Activated CD4-positive, alpha-beta T cell treated with anti-CD3 and anti-CD28 coated beads for 36 hours (primary cell): ENCODE measurements at regions of chrX and their contacts with region 1.

Region 1: DNA sequence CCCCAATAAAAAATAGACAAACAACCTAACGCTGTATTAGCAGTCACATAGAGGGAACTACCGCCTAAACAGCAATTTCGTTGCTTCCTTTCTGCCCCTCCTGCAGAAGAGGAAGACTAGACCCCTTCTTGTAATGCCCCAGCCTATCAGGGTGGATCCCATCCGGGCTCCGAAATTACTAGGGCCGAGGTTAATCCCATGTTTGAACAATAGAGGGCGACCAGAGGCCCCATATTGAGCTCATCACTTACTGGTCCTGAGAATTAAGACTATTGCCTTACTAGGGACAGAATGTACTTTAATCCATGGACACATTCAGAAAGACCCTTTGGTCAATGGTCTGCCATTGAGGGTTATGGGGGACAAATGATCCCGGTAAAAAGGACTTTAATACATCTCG is 11.8 kb upstream of the ZNF630 start:
- DNase-seq: peak; percentile 60
- ATAC-seq: peak; percentile 68
- H3K4me3 Mint-ChIP-seq: no peak overlapping the region
- H3K27ac Mint-ChIP-seq: no peak overlapping the region
- H3K4me1 Mint-ChIP-seq: no peaks in the 10 kb centered on the region
- H3K27me3 Mint-ChIP-seq: no peaks in the 10 kb centered on the region

Region 2: GRCh38 chrX:48468693-48469691 is 385.8 kb after region 1 on chrX:
- CTCF ChIA-PET with region 1: no interaction called
- POLR2A ChIA-PET with region 1: no interaction called
- intact Hi-C with region 1: loop called (anchors 2 to 5 kb)
- DNase-seq: peak; percentile 61
- ATAC-seq: peak; percentile 47
- H3K4me3 Mint-ChIP-seq: peak overlapping the region; percentile 89
- H3K27ac Mint-ChIP-seq: peak overlapping the region; percentile 95
- H3K4me1 Mint-ChIP-seq: peaks cover 35% of the 10 kb centered on the region
- H3K27me3 Mint-ChIP-seq: no peaks in the 10 kb centered on the region

Region 3: DNA sequence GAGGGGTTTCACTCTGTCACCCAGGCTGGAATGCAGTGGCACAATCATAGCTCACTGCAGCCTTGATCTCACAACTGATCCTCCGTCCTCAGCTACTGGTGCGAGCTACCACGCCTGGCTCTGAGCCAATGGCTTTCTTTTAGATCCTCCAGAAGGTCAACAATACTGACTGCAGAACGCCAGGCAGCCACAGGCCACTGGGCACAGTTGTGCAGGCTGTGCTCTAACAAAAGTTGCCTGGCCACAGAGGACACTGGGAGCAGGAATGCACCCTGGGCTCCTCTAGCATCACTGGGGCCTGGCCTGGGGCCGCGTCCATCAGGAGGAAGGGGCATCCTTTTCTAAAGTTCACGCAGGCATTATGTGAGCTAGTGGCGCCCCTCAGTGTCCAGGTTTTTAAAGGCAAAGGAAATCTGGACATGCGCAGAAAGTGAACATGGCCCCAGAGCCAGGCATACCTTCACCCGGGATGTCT is 410.7 kb after region 1 on chrX:
- CTCF ChIA-PET with region 1: no interaction called
- POLR2A ChIA-PET with region 1: no interaction called
- intact Hi-C with region 1: loop called in 1 of 2 experiments (anchors 1 kb)
- DNase-seq: peak; percentile 52
- ATAC-seq: peak; percentile 44
- H3K4me3 Mint-ChIP-seq: no peak overlapping the region
- H3K27ac Mint-ChIP-seq: no peak overlapping the region
- H3K4me1 Mint-ChIP-seq: no peaks in the 10 kb centered on the region
- H3K27me3 Mint-ChIP-seq: no peaks in the 10 kb centered on the region

Region 4: GRCh38 chrX:49129427-49129826 is 1046.2 kb after region 1 on chrX:
- CTCF ChIA-PET with region 1: no interaction called
- POLR2A ChIA-PET with region 1: no interaction called
- intact Hi-C with region 1: no loop called
- DNase-seq: no peak
- ATAC-seq: no peak
- H3K4me3 Mint-ChIP-seq: no peak overlapping the region
- H3K27ac Mint-ChIP-seq: no peak overlapping the region
- H3K4me1 Mint-ChIP-seq: no peaks in the 10 kb centered on the region
- H3K27me3 Mint-ChIP-seq: no peaks in the 10 kb centered on the region